ENCODE measurements at regions of chr1 and their contacts with region 1.

Region 1: GRCh38 chr1:89454845-89455521 is 69.6 kb upstream of the LRRC8B start:
- H3K4me3 Mint-ChIP-seq: no peak overlapping the region
- H3K27ac Mint-ChIP-seq: no peak overlapping the region
- H3K4me1 Mint-ChIP-seq: peaks cover under 1% of the 10 kb centered on the region
- H3K27me3 Mint-ChIP-seq: peaks cover 2% of the 10 kb centered on the region

Region 2: DNA sequence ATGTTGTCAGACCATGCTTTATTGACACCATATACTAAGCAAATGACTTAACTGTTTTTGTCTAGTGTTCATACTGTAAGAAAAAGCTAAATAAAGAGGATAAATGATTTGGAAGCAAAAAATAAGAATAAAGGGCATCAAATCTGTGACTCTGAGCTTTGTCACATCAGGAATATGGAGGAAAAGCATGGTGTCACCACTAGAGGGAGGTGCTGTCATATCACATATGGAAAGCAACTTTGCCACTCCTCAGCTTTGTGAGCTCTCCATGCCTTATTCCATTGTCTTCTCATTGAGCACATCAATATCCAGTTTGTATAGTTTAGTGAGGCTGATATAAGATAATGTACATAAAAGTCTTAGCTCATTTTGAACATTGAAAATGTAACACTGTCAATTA is 369.2 kb before region 1 on chr1:
- intact Hi-C with region 1: loop called (anchors 2 kb)
- H3K4me3 Mint-ChIP-seq: no peak overlapping the region
- H3K27ac Mint-ChIP-seq: no peak overlapping the region
- H3K4me1 Mint-ChIP-seq: peaks cover 18% of the 10 kb centered on the region
- H3K27me3 Mint-ChIP-seq: no peaks in the 10 kb centered on the region

Region 3: DNA sequence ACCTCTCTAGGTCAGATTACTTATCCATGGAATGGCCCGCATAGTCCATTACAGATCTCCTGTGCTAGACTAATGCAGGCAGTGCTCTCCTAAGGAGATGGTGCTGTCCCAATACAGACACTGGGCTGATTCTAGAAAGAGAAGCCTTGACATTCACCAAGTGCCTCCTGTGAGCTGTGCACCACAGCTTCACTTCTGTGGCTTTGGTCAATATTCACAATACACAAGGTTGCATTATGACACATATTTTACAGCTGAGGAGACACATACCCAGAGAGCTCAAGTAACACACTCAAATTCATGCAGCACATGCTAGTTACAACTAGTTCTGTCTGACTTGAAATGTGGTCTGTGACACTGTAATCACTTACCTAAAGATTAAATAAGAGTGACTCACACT is 10.2 kb after region 1 on chr1:
- intact Hi-C with region 1: no loop called
- H3K4me3 Mint-ChIP-seq: no peak overlapping the region
- H3K27ac Mint-ChIP-seq: no peak overlapping the region
- H3K4me1 Mint-ChIP-seq: peaks cover 38% of the 10 kb centered on the region
- H3K27me3 Mint-ChIP-seq: peaks cover 13% of the 10 kb centered on the region

Measured in dendritic cell treated with granulocyte-macrophage colony-stimulating factor and Interleukin-4, amounts not matched to agents 40 ng/mL and 50 ng/mL, for 4 days (primary cell).